Left cardiac atrium (tissue), 4 donors: ENCODE measurements at regions of chr19 and their contacts with region 1.

Region 1: GRCh38 chr19:52570000-52570861 is at the start of gene ZNF701:
- DNase-seq: peak; percentile 96
- ATAC-seq: peak; percentile 100
- total RNA-seq, gene ZNF701: 14.6 to 18.4 TPM

Region 2: DNA sequence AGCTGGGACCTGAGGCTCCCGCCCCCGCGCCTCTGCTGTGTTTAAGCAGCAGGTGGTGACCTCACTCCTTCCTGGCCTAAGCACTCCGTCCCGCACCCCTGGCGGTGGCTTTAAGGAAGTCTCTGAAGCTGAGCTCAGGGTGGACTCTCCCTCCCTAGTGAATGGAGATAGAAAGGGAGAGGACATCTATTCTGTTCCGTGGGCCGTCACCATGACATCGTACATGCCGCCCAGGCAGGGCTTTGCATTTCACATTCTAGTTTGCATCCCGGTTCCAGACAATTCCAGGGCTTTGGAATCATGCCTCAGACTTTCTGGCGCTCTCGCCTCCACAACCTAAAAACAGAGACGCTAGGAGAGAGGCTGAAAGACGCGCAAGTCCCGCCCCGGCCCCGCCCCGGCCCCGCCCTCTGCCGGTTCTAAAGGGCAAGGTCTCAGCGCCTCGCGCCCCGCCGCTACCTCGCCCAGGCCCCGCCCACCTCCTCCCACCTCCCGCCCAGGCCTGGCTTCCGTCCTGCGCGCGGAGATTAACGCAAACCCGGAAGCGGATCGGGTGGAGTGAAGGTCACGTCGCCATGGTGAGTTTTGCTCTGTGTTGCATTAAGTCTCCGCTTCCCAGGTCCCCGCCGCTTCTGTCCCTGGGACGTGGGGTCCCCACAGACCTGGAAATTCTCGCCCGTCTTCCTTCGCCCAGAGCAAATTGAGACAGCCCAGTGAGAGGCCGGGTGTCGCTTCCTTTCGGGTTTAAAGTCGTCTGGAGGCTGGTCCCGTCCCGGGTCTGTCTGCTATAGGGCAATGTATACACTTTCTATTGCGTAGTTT is 42.9 kb before region 1 on chr19 and contains the start of gene ZNF808:
- intact Hi-C with region 1: loop called in 1 of 2 experiments (anchors 5 kb)
- DNase-seq: peak; percentile 97
- ATAC-seq: peak; percentile 98 to 99
- total RNA-seq, gene ZNF808: 25.1 to 29.3 TPM